ENCODE measurements at regions of chr6 and their contacts with region 1.

Region 1: GRCh38 chr6:81214414-81215091 is 537.9 kb downstream of the TENT5A start:
- DNase-seq: no peak
- ATAC-seq: peak; percentile 74
- H3K4me3 ChIP-seq: peak overlapping the region in 1 of 3 experiments; percentile 56; a peak in 1 of 6 replicates
- H3K27ac ChIP-seq: no peak overlapping the region
- H3K4me1 ChIP-seq: no peaks in the 10 kb centered on the region
- H3K27me3 ChIP-seq: no peaks in the 10 kb centered on the region
- CTCF ChIP-seq: no peak
- EP300 ChIP-seq: no peak
- POLR2A ChIP-seq: no peak
- RAD21 ChIP-seq: no peak

Region 2: DNA sequence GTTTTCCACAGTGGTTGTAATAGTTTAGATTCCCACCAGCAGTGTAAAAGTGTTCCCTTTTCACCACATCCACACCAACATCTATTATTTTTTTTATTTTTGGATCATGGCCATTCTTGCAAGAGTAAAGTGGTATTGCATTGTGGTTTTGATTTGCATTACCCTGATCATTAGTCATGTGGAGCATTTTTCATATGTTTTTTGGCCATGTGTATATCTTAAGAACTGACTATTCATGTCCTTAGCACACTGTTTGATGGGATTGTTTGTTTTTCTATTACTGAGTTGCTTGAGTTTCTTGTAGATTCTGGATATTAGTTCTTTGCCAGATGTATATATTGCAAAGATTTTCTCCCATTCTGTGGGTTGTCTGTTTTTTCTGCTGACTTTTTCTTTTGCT is 282.2 kb before region 1 on chr6:
- CTCF ChIA-PET with region 1: no interaction called
- POLR2A ChIA-PET with region 1: no interaction called
- in situ Hi-C with region 1: no loop called
- intact Hi-C with region 1: no loop called
- DNase-seq: no peak
- ATAC-seq: no peak
- H3K4me3 ChIP-seq: no peak overlapping the region
- H3K27ac ChIP-seq: no peak overlapping the region
- H3K4me1 ChIP-seq: no peaks in the 10 kb centered on the region
- H3K27me3 ChIP-seq: no peaks in the 10 kb centered on the region
- CTCF ChIP-seq: no peak
- EP300 ChIP-seq: no peak
- POLR2A ChIP-seq: no peak
- RAD21 ChIP-seq: no peak

Region 3: DNA sequence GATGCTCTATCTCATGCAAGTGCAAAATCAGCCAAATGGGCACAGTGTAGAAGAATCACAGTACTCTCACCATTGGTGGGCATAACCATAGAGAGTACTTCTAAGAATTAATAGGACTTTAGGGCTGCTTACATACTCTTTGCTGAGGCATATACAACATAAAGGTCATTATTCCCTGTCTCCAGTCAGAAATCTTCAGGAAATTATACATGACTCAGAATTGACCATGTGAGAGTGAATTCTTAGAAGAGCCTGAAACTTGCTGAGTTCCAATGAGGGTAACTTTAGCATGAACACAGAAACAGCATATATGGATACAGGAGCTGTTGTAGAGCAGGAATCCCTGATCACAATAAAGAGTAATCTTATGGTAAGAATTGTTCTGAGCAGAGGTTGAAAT is 39.3 kb after region 1 on chr6:
- CTCF ChIA-PET with region 1: no interaction called
- POLR2A ChIA-PET with region 1: no interaction called
- in situ Hi-C with region 1: no loop called
- intact Hi-C with region 1: loop called (anchors 1 kb)
- DNase-seq: no peak
- ATAC-seq: no peak
- H3K4me3 ChIP-seq: no peak overlapping the region
- H3K27ac ChIP-seq: no peak overlapping the region
- H3K4me1 ChIP-seq: no peaks in the 10 kb centered on the region
- H3K27me3 ChIP-seq: no peaks in the 10 kb centered on the region
- CTCF ChIP-seq: no peak
- EP300 ChIP-seq: no peak
- POLR2A ChIP-seq: no peak
- RAD21 ChIP-seq: no peak

Measured in HepG2 (cell line).